ENCODE measurements at regions of chr6 and their contacts with region 1.

Region 1: DNA sequence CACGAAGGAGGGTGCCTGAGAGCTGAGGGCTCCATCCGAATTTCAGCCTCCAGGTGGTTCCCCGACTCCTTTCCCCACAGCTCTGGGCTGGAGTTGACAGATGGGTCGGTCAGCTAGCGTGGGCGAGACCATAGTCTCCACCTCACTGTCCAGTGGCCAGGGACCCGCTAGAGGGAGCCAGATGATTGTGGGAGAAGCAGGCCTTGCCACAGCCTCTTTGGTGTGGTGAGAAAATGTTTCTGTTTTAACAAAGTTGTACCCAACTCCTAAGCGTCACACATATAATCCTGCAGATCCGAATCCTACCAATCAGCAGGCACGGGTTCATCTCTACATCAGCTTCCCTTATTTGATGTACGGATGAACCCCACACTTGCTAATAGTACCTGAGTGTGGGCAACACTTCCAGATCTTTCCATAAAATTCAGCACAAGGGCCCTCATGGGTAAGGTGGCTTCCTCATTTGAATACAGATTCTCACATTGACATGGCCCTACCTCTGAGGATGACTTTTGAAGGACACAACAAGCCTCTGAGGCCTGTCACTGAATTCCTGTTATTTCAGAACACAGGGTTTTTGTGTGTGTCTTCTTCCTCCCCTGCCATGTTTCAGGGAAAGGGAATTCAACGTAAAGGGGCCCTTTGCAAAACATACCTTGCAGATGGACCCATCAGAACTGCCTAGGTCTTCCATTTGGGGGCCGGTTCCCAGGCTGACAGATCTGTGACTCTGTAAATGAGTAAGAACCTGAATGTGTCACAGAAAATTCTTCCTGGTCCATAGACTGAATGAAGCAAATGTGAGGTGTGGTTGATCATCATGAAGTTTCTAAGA is 103.2 kb upstream of the DUSP22 start:
- DNase-seq: peak; percentile 91
- H3K4me3 ChIP-seq: no peak overlapping the region
- H3K27ac ChIP-seq: no peak overlapping the region
- H3K4me1 ChIP-seq: peaks cover 0 to 22% (median 15%) of the 10 kb centered on the region in 4 donors
- H3K27me3 ChIP-seq: no peaks in the 10 kb centered on the region
- CTCF ChIP-seq: peak; percentile 54 to 95 (median 68)
- EP300 ChIP-seq: no peak
- POLR2A ChIP-seq: no peak

Region 2: DNA sequence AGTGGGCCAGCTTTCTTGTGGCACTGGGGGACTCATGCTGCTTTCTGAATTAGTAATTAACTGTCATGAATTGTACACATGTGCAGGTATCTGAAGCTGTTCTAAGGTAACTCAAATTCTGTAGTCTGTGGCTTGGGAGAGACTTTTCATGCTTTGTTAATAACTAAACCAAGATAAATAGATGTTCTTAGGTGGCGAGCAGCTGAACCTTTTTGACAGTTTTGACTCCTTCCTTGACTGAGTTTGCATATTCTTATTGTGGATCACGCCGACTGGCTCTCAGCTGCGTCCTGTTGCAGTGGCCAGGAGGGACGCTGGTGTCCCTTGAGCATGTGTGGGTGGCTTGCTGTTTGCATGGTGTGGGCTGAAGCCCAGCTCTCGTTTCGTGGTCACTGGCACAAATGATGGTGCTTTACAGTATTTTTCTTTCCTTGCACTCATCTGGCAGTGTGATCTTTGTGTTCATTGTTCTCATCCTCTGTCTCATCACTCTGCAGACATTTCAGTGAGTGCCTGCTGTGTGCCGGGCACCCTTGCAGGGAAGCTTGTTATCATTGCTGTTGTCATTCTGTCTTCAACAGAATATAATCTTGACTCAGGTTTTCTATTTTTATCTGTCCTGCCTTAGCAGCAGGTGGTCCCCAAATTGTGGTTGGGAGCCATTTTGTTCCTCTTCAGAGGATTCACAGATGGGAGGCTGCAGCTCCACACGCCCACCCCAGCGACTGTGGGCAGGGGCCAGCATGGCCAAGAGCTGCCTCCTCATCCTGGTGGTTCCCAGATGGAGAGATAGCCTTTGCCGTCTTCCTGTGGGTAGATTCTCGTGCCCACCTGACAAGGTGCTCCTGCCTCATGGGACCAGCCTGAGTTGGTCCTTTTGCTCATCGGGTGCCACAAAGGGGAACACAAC is 142.8 kb after region 1 on chr6:
- intact Hi-C with region 1: loop called (anchors 5 kb)
- DNase-seq: no peak
- H3K4me3 ChIP-seq: no peak overlapping the region
- H3K27ac ChIP-seq: peak overlapping the region in 2 of 4 donors; percentile 39 to 69
- H3K4me1 ChIP-seq: peaks cover 0 to 65% (median 48%) of the 10 kb centered on the region in 4 donors
- H3K27me3 ChIP-seq: no peaks in the 10 kb centered on the region
- CTCF ChIP-seq: no peak
- EP300 ChIP-seq: no peak
- POLR2A ChIP-seq: no peak

Region 3: DNA sequence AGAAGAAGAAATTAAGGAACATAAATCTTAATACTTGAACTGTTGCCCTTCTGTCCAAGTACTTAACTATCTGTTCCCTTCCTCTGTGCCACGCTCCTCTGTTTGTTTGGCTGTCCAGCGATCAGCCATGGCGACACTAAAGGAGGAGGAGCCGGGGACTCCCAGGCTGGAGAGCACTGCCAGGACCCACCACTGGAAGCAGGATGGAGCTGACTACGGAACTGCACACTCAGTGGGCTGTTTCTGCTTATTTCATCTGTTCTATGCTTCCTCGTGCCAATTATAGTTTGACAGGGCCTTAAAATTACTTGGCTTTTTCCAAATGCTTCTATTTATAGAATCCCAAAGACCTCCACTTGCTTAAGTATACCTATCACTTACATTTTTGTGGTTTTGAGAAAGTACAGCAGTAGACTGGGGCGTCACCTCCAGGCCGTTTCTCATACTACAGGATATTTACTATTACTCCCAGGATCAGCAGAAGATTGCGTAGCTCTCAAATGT is 219.6 kb after region 1 on chr6:
- intact Hi-C with region 1: loop called (anchors 2 kb)
- DNase-seq: no peak
- H3K4me3 ChIP-seq: no peak overlapping the region
- H3K27ac ChIP-seq: no peak overlapping the region
- H3K4me1 ChIP-seq: peaks cover 0 to 7% (median 0%) of the 10 kb centered on the region in 4 donors
- H3K27me3 ChIP-seq: peaks cover 0 to 12% (median 0%) of the 10 kb centered on the region in 3 donors
- CTCF ChIP-seq: peak; percentile 39 to 48 (median 47)
- EP300 ChIP-seq: no peak
- POLR2A ChIP-seq: no peak

Region 4: GRCh38 chr6:453152-453551 is 264.1 kb after region 1 on chr6:
- intact Hi-C with region 1: no loop called
- DNase-seq: peak; percentile 78
- H3K4me3 ChIP-seq: no peak overlapping the region
- H3K27ac ChIP-seq: no peak overlapping the region
- H3K4me1 ChIP-seq: no peaks in the 10 kb centered on the region
- H3K27me3 ChIP-seq: no peaks in the 10 kb centered on the region
- CTCF ChIP-seq: no peak
- EP300 ChIP-seq: no peak
- POLR2A ChIP-seq: no peak